OCI-LY7 (cell line): ENCODE measurements at regions of chr14 and their contacts with region 1.

Region 1: DNA sequence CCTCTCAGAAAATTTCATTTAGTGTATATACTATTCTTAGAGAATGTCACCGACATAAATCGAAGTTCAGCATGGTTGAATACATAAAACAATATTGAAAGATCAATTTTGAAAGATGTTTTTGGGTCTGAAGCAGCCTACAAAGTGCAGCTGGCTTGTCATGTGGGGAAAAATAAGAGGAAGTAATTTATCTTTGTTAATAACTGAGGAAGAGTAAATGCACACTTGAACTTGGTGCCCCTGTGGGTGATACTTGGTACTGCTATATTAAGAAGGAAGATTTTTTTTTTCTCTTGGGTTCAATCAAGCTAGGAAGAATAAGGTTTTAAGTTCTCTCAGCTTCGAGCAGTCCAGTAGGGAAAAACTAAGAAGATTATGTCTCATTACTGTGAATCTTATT is 661.3 kb downstream of the RPL10L start:
- DNase-seq: peak; percentile 1
- H3K4me3 ChIP-seq: no peak overlapping the region
- H3K27ac ChIP-seq: no peak overlapping the region
- H3K4me1 ChIP-seq: no peaks in the 10 kb centered on the region
- CTCF ChIP-seq: peak; percentile 58

Region 2: GRCh38 chr14:45902241-45902640 is 88.0 kb before region 1 on chr14:
- CTCF ChIA-PET with region 1: no interaction called
- POLR2A ChIA-PET with region 1: no interaction called
- intact Hi-C with region 1: no loop called
- DNase-seq: no peak
- H3K4me3 ChIP-seq: no peak overlapping the region
- H3K27ac ChIP-seq: no peak overlapping the region
- H3K4me1 ChIP-seq: no peaks in the 10 kb centered on the region
- CTCF ChIP-seq: no peak

Region 3: DNA sequence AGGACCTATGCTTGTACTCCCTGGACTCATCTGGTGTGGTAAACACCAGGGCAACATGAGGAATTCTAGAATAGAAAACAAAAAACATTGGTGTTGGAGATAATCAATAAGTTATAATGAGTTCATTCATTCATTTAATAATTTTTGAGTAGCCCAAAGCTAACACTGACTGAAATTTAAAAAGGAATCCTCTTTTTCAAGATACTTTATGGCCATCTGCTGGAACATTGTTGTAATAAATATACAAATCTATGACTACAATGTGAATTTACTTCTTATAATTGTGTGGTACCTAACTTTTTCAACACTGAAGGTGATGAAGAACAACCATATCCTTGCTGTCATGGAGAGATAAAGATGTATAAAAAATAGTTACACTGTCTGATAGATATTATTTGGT is 49.9 kb before region 1 on chr14:
- CTCF ChIA-PET with region 1: no interaction called
- POLR2A ChIA-PET with region 1: no interaction called
- intact Hi-C with region 1: no loop called
- DNase-seq: no peak
- H3K4me3 ChIP-seq: no peak overlapping the region
- H3K27ac ChIP-seq: no peak overlapping the region
- H3K4me1 ChIP-seq: no peaks in the 10 kb centered on the region
- CTCF ChIP-seq: no peak

Region 4: DNA sequence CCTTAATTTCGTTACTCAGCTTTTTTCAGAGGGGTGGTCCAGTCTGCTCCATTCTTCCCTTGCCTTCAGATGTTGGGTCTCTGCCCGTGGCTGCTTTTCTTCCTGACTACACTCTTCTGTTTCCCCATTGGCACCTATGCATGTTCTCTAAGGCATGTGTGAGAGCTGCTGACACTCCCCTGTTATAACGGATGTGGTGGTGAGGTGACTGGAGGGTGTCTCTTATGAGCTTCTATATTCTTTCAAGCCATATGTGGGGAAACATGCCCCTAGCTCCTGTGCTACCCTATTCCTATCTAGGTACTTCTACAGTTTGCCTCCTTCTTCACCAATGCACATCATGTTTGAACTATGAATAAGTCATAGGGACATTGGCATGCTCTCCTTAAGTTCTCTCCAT is 18.1 kb after region 1 on chr14:
- CTCF ChIA-PET with region 1: no interaction called
- POLR2A ChIA-PET with region 1: interaction called, 3 read pairs
- intact Hi-C with region 1: loop called (anchors 1 kb)
- DNase-seq: no peak
- H3K4me3 ChIP-seq: no peak overlapping the region
- H3K27ac ChIP-seq: no peak overlapping the region
- H3K4me1 ChIP-seq: no peaks in the 10 kb centered on the region
- CTCF ChIP-seq: no peak